ENCODE measurements at regions of chr19 and their contacts with region 1.

Region 1: DNA sequence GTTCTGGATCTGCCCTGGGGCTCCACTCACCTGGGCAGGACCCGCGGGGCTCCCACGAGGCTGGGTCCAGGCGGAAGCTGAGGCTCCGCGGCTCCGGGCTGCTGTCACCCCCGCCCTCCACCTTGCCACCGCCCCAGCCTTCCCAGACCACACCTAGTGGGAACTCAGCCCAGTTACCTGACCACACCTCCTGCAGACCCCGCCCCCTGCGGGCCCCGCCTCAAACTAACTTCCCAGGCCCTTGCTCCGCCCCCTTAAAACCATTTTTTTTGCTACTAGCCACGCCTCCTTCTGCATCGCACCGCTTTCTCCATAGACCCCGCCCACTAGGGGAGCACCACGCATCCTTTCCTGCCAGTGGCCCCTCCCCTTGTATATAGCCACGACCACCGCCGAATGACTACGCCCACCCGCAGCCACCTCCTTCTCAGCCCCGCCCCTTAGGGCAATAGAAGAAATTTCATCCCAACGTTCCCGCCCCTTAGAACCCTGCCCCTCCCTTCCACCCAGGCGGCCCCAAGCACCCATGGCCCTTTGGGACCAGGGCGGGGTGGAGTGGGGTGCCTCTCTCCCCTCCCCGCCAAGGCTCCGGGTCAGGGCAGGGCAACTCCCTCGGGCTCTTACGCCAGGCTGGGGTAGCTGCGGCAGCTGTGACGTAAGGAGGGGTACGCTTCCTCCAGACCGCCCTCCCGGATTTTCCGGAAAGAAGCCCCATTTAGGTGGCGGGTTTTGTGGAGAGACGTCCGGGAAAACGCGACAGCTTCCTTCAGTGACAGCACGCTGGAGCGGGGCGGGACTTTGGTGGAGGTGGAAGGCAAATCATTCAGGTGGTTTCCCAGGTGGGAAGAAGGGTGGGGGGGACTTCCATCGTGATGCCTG is at the start of gene SH2D3A:
- DNase-seq: peak; percentile 92
- ATAC-seq: peak; percentile 79
- H3K4me3 ChIP-seq: peak within 1 kb of the TSS; percentile 85
- H3K27ac ChIP-seq: peak within 1 kb of the TSS; percentile 83
- H3K4me1 ChIP-seq: peaks cover 23% of the 10 kb centered on the region
- H3K27me3 ChIP-seq: no peaks in the 10 kb centered on the region
- CTCF ChIP-seq: no peak
- EP300 ChIP-seq: no peak; a peak in 1 of 4 replicates
- POLR2A ChIP-seq: peak; percentile 70; the same call in 1 of the 2 replicates
- RAD21 ChIP-seq: no peak
- polyA plus RNA-seq, gene SH2D3A: 0.77 to 1.4 TPM

Region 2: GRCh38 chr19:6790194-6791128 is 22.9 kb after region 1 on chr19:
- CTCF ChIA-PET with region 1: interaction called, 13 read pairs
- POLR2A ChIA-PET with region 1: interaction called, 4 read pairs
- RAD21 ChIA-PET with region 1: no interaction called
- SMC1A ChIA-PET with region 1: interaction called, 3 read pairs
- in situ Hi-C with region 1: no loop called
- intact Hi-C with region 1: no loop called
- DNase-seq: no peak
- ATAC-seq: no peak
- H3K4me3 ChIP-seq: no peak overlapping the region
- H3K27ac ChIP-seq: no peak overlapping the region
- H3K4me1 ChIP-seq: no peaks in the 10 kb centered on the region
- H3K27me3 ChIP-seq: no peaks in the 10 kb centered on the region
- CTCF ChIP-seq: no peak
- EP300 ChIP-seq: no peak
- POLR2A ChIP-seq: no peak
- RAD21 ChIP-seq: no peak

Region 3: DNA sequence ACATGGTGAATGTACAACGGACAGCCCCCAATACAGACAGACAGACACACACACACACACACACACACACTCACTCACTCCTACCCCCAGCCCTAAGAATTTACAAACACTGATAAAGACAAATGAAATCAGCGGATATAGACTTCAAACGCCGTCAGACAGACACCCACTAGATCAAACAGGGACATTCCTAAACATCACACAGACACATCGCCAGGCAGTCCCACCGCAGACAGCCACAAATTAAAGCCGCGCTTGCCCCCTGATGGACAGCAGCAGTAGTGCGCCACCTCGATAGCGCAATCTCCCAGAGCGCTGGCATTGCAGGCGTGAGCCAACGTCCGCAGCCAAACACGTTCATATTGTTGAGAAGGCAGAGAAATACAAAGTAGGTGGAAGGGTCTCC is 95.1 kb after region 1 on chr19:
- CTCF ChIA-PET with region 1: interaction called, 79 read pairs
- POLR2A ChIA-PET with region 1: interaction called, 4 read pairs
- RAD21 ChIA-PET with region 1: interaction called, 29 read pairs
- SMC1A ChIA-PET with region 1: interaction called, 22 read pairs
- in situ Hi-C with region 1: no loop called
- intact Hi-C with region 1: loop called (anchors 2 kb)
- DNase-seq: peak; percentile 80
- ATAC-seq: peak; percentile 94
- H3K4me3 ChIP-seq: peak overlapping the region; percentile 67; the same call in 1 of the 2 replicates
- H3K27ac ChIP-seq: peak overlapping the region; percentile 56; the same call in 1 of the 2 replicates
- H3K4me1 ChIP-seq: peaks cover 11% of the 10 kb centered on the region
- H3K27me3 ChIP-seq: no peaks in the 10 kb centered on the region
- CTCF ChIP-seq: peak; percentile 92 to 99 (median 99); a peak in 5 of 6 replicates
- EP300 ChIP-seq: no peak
- POLR2A ChIP-seq: peak; percentile 65
- RAD21 ChIP-seq: peak; percentile 88

Region 4: GRCh38 chr19:6925801-6926751 is 158.5 kb after region 1 on chr19:
- CTCF ChIA-PET with region 1: no interaction called
- POLR2A ChIA-PET with region 1: interaction called, 10 read pairs
- RAD21 ChIA-PET with region 1: no interaction called
- SMC1A ChIA-PET with region 1: no interaction called
- in situ Hi-C with region 1: no loop called
- intact Hi-C with region 1: no loop called
- DNase-seq: peak; percentile 68
- ATAC-seq: peak; percentile 97
- H3K4me3 ChIP-seq: peak overlapping the region; percentile 52
- H3K27ac ChIP-seq: peak overlapping the region; percentile 42
- H3K4me1 ChIP-seq: peaks cover 4% of the 10 kb centered on the region
- H3K27me3 ChIP-seq: no peaks in the 10 kb centered on the region
- CTCF ChIP-seq: peak; percentile 44 to 52 (median 51)
- EP300 ChIP-seq: no peak
- POLR2A ChIP-seq: no peak
- RAD21 ChIP-seq: peak; percentile 41